CD4-positive, alpha-beta memory T cell (primary cell): ENCODE measurements at regions of chr5 and their contacts with region 1.

Region 1: DNA sequence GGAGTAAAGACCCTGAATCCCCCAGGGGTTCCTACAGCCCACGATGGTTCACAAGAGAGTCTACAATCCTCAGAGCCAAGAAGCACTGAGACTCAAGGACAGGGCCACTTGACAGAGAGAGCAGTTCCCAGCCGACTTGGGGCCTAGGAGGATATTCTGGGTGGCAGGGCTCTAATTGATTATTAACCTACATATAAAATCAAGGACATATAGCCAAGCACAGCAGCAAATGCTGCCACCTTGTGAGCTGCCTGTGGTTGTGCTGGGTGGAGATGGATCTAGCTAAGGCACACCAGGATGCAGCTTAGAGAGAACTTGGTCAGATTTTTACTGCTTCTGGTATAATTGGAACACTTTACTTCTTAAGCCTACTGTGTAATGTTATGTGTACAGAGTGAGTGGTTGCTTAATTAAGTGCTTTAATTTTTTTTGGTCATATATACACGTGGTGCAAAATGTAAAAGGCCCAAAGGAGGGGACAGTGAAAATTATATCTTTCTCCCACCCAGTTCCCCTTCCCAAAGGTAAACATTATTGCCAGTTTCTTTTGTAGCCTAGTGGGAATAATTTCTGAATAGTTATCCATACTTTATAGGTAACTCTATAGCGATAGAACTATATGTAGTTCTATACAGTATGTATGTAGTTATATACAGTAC is 78.8 kb downstream of the F2RL2 start:
- DNase-seq: peak; percentile 61 to 75 (median 69)
- H3K4me3 ChIP-seq: peak overlapping the region; percentile 12 to 46
- H3K4me3 Mint-ChIP-seq: peak overlapping the region; percentile 80 to 89 (median 83)
- H3K27ac ChIP-seq: peak overlapping the region; percentile 82
- H3K27ac Mint-ChIP-seq: peak overlapping the region; percentile 91 to 99 (median 99)
- H3K4me1 ChIP-seq: peaks cover 96% of the 10 kb centered on the region
- H3K4me1 Mint-ChIP-seq: peaks cover 79 to 95% (median 87%) of the 10 kb centered on the region in 4 donors
- H3K27me3 ChIP-seq: no peaks in the 10 kb centered on the region
- H3K27me3 Mint-ChIP-seq: no peaks in the 10 kb centered on the region

Region 2: DNA sequence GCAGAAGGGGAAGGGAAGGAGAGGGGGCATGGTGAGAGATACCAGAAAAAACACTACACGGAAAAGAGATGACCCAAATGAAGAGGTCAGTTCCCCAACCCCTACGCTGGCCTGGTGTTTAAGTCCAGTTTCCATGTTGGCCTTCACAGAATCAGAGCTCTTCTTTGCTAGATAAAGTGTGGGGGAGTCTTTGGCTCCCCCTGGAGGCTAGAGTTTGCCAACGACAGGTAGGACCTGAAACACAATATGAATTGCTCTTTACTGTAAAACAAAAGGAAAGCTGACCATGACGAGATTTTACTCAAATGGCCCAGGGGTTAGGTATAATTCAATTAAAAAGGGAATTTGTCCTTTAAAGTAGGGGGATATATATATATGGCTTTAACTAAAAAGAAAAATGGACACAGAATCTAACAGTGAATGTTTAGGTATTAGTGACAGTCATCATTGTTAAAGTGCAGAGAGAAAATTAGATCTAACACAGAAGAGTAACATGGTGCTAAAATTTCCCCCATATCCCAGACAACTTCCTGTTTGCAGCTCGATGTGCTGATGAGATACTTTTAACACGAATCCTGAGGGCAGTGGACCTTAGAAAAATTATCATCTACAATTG is 369.2 kb before region 1 on chr5:
- CTCF ChIA-PET with region 1: interaction called, 5 read pairs
- POLR2A ChIA-PET with region 1: interaction called, 3 read pairs
- intact Hi-C with region 1: loop called (anchors 2 kb)
- DNase-seq: peak in 4 of 5 donors; percentile 41 to 54 (median 48)
- H3K4me3 ChIP-seq: peak overlapping the region in 1 of 2 donors; percentile 3
- H3K4me3 Mint-ChIP-seq: peak overlapping the region; percentile 56 to 88 (median 72)
- H3K27ac ChIP-seq: no peak overlapping the region
- H3K27ac Mint-ChIP-seq: peak overlapping the region; percentile 4 to 88 (median 82)
- H3K4me1 ChIP-seq: peaks cover 24% of the 10 kb centered on the region
- H3K4me1 Mint-ChIP-seq: peaks cover 16 to 20% (median 17%) of the 10 kb centered on the region in 4 donors
- H3K27me3 ChIP-seq: no peaks in the 10 kb centered on the region
- H3K27me3 Mint-ChIP-seq: no peaks in the 10 kb centered on the region

Region 3: GRCh38 chr5:76325876-76326491 is 218.4 kb before region 1 on chr5:
- CTCF ChIA-PET with region 1: interaction called, 20 read pairs
- POLR2A ChIA-PET with region 1: interaction called, 38 read pairs
- intact Hi-C with region 1: no loop called
- DNase-seq: peak; percentile 52 to 65 (median 57)
- H3K4me3 ChIP-seq: no peak overlapping the region
- H3K4me3 Mint-ChIP-seq: peak overlapping the region; percentile 66 to 84 (median 74)
- H3K27ac ChIP-seq: peak overlapping the region; percentile 49
- H3K27ac Mint-ChIP-seq: peak overlapping the region; percentile 91 to 97 (median 94)
- H3K4me1 ChIP-seq: peaks cover 66% of the 10 kb centered on the region
- H3K4me1 Mint-ChIP-seq: peaks cover 52 to 79% (median 67%) of the 10 kb centered on the region in 4 donors
- H3K27me3 ChIP-seq: no peaks in the 10 kb centered on the region
- H3K27me3 Mint-ChIP-seq: no peaks in the 10 kb centered on the region

Region 4: DNA sequence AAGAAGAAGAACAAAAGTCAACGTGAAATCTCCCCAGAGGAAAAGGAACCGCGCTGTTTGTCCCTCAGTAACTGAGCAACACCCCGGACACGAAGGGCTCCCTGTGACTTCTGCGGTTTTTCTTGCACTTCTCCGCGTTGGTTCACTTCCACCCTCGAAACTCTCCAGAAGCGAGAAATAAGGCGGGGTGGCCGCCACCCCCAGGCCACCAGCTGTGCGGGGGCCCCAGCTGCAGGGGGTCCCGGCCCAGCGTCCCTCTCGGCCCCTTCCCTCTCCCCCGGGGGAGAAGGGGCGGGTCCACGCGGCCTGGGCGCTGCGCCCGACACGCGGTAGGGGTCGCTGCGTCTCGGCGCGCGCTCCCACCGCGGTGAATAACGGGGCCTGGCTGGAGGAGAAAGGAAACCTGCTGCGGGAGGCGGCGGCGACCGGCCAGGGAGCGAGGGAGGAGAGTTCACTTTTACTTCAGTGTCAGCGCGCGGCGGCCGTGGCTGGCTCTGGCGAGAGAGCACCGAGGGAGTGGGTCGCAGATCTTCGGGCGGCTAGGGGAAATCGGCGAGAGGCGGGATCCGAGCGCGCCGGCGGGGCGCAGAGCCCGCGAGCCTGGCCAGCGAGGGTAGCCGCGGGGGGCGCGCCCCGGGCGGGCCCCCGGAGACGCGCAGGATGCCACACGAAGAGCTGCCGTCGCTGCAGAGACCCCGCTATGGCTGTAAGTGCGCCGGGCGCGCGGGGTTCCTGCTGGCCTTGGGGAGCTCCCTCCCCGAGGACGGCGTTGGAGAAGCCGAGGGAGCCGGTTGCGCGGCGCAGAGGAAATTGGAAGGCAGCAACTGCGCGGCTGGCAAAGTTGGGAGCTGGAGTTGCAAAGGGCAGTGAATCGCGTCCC is 141.3 kb before region 1 on chr5 and contains the start of gene IQGAP2:
- CTCF ChIA-PET with region 1: interaction called, 140 read pairs
- POLR2A ChIA-PET with region 1: interaction called, 248 read pairs
- intact Hi-C with region 1: loop called (anchors 1 kb)
- DNase-seq: peak; percentile 91 to 96 (median 94)
- H3K4me3 ChIP-seq: peak within 1 kb of the TSS; percentile 68 to 82
- H3K4me3 Mint-ChIP-seq: peak within 1 kb of the TSS; percentile 95 to 98 (median 97)
- H3K27ac ChIP-seq: peak within 1 kb of the TSS; percentile 93
- H3K27ac Mint-ChIP-seq: peak within 1 kb of the TSS; percentile 96 to 99 (median 98)
- H3K4me1 ChIP-seq: peaks cover 56% of the 10 kb centered on the region
- H3K4me1 Mint-ChIP-seq: peaks cover 45 to 72% (median 54%) of the 10 kb centered on the region in 4 donors
- H3K27me3 ChIP-seq: no peaks in the 10 kb centered on the region
- H3K27me3 Mint-ChIP-seq: no peaks in the 10 kb centered on the region
- total RNA-seq, gene IQGAP2: 125 to 126 TPM

Region 5: GRCh38 chr5:76527685-76528161 is 16.7 kb before region 1 on chr5:
- CTCF ChIA-PET with region 1: interaction called, 6 read pairs
- POLR2A ChIA-PET with region 1: interaction called, 22 read pairs
- intact Hi-C with region 1: no loop called
- DNase-seq: peak in 2 of 5 donors; percentile 9 to 28
- H3K4me3 ChIP-seq: no peak overlapping the region
- H3K4me3 Mint-ChIP-seq: peak overlapping the region in 5 of 8 donors; percentile 6 to 55 (median 39)
- H3K27ac ChIP-seq: no peak overlapping the region
- H3K27ac Mint-ChIP-seq: peak overlapping the region; percentile 7 to 76 (median 67)
- H3K4me1 ChIP-seq: peaks cover 76% of the 10 kb centered on the region
- H3K4me1 Mint-ChIP-seq: peaks cover 62 to 88% (median 78%) of the 10 kb centered on the region in 4 donors
- H3K27me3 ChIP-seq: no peaks in the 10 kb centered on the region
- H3K27me3 Mint-ChIP-seq: no peaks in the 10 kb centered on the region

Region 6: DNA sequence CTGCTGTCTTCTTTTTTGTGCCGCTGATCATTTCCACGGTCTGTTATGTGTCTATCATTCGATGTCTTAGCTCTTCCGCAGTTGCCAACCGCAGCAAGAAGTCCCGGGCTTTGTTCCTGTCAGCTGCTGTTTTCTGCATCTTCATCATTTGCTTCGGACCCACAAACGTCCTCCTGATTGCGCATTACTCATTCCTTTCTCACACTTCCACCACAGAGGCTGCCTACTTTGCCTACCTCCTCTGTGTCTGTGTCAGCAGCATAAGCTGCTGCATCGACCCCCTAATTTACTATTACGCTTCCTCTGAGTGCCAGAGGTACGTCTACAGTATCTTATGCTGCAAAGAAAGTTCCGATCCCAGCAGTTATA is 188.6 kb after region 1 on chr5:
- CTCF ChIA-PET with region 1: no interaction called
- POLR2A ChIA-PET with region 1: interaction called, 10 read pairs
- intact Hi-C with region 1: no loop called
- DNase-seq: peak; percentile 65 to 88 (median 70)
- H3K4me3 ChIP-seq: peak overlapping the region in 1 of 2 donors; percentile 8
- H3K4me3 Mint-ChIP-seq: peak overlapping the region; percentile 44 to 80 (median 78)
- H3K27ac ChIP-seq: peak overlapping the region; percentile 65
- H3K27ac Mint-ChIP-seq: peak overlapping the region; percentile 77 to 95 (median 90)
- H3K4me1 ChIP-seq: peaks cover 48% of the 10 kb centered on the region
- H3K4me1 Mint-ChIP-seq: peaks cover 18 to 48% (median 32%) of the 10 kb centered on the region in 4 donors
- H3K27me3 ChIP-seq: no peaks in the 10 kb centered on the region
- H3K27me3 Mint-ChIP-seq: no peaks in the 10 kb centered on the region